ENCODE measurements at regions of chr6 and their contacts with region 1.

Region 1: DNA sequence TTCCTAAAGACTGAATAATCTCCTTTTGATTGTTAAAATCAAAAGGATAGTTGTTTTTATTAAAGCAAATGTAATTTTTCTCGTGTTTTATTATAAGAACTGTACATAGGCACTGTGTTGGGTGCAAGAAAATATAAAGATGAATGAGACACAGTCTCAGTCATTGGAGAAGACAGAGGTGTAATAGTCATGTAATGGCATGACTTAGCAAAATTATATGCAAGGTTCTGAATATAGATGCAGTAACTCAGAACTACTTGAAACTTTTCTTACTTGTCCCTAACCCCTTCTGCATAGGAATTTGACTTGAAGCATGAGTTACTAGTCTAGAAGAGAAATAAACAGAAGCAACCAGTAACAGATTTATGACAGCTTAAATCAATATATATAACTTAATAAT is 14.9 kb downstream of the WTAP start:
- DNase-seq: no peak
- H3K4me3 ChIP-seq: no peak overlapping the region
- H3K27ac ChIP-seq: no peak overlapping the region
- H3K4me1 ChIP-seq: no peaks in the 10 kb centered on the region
- H3K27me3 ChIP-seq: no peaks in the 10 kb centered on the region
- CTCF ChIP-seq: no peak
- POLR2A ChIP-seq: no peak

Region 2: DNA sequence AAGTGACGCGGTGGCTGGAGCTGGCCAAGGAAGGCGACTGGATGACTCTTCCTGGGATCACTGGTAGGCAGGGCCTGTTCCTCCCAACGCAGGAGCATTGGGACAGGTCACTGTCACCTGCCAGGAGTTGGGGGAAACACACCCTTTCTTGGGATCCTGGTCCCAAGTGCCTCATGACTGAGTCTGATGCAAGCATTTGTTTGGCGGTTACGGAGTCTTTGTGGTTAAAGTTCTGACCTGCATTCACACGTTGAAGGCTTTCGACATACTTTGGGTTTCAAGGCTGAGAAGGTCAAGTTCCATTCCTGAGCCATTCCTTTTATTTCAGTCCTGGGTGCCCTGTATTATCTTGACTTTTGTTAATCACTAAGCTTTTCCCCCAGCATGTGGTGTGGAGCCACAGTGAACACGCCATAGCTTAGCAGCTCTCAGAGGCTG is 63.9 kb after region 1 on chr6:
- intact Hi-C with region 1: no loop called
- DNase-seq: no peak
- H3K4me3 ChIP-seq: no peak overlapping the region
- H3K27ac ChIP-seq: no peak overlapping the region
- H3K4me1 ChIP-seq: no peaks in the 10 kb centered on the region
- H3K27me3 ChIP-seq: no peaks in the 10 kb centered on the region
- CTCF ChIP-seq: no peak
- POLR2A ChIP-seq: no peak

Region 3: DNA sequence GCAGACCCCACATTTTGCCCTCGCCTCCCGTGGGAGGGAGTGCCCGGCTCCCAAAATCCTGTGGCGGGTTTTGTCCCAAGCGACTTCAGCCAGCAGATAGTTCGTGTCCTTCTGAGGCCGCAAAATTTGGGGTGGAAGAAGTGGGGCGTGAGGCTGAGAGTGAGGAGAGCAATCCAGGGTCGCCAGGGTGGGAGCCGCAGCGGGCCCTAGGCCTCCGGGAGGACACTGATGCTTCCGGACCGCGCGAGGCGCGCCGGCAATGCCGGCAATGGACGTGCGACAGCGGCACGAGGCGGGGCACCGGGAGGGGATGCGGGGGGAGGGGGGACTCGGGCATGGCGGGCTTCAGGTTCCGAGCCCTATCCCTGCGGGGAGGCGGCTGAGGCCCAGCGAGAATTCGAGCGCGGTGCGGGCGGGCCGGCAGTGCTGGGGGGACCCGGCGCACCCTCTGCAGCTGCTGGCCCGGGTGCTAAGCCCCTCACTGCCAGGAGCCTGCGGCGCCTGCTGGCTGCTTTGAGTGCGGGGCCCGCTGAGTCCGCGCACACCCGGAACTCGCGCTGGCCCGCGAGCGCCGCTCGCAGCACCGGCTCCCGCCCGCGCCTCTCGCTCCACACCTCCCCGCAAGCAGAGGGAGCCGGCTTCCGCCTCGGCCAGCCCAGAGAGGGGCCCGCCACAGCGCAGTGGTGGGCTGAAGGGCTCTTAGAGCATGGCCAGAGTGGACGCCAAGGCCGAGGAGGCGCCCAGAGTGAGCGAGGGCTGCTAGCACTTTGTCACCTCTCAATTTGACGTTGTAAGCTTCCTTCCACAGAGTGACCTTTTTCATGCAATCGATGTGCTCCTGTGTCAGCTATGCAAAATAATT is 778.1 kb after region 1 on chr6:
- intact Hi-C with region 1: loop called (anchors 10 kb)
- DNase-seq: peak; percentile 55 to 83
- H3K4me3 ChIP-seq: peak overlapping the region; percentile 69 to 81 (median 72)
- H3K27ac ChIP-seq: peak overlapping the region; percentile 67 to 75
- H3K4me1 ChIP-seq: no peaks in the 10 kb centered on the region
- H3K27me3 ChIP-seq: no peaks in the 10 kb centered on the region
- CTCF ChIP-seq: peak in 2 of 3 donors; percentile 85 to 88
- POLR2A ChIP-seq: no peak